Transverse colon (tissue), 4 donors: ENCODE measurements at regions of chr3 and their contacts with region 1.

Region 1: DNA sequence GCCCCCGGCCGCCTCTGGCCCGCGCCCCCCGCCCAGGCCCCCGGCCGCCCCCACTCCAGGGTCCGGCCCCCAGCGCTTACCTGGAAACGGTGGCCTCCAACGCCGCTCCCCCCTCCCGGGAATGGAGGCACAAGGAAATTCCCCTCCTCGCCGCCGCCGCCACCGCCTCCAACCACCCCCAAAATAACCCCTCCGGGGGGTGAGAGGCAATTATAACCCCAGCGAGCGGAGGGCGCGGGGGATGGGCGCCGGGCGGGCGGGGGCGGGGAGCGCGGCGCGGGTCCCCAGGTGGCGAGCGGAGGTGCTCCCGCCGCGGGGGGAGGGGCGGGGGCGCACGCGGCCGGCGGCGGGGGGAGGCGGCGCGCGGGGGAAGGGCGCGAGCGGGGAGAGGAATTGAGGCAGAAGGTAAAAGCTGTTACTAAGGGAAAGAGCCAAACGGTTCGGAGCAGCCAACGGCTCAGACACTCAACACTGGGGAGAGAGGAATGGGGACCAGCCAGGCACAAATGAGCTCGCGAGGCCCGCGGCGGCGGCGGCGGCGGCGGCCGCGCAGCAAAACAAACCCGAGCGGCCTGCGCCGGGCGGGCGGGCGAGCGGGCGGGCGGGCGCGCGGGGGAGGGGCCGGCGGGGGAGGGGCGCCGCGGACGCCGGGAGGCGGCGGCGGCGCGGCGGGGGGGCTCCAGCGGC is at the start of gene TBL1XR1:
- DNase-seq: peak; percentile 95
- H3K4me3 ChIP-seq: peak within 1 kb of the TSS; percentile 87 to 96 (median 92)
- H3K27ac ChIP-seq: peak within 1 kb of the TSS; percentile 99 to 100 (median 100)
- H3K4me1 ChIP-seq: peaks cover 21 to 56% (median 31%) of the 10 kb centered on the region in 4 donors
- H3K27me3 ChIP-seq: no peaks in the 10 kb centered on the region
- CTCF ChIP-seq: no peak
- EP300 ChIP-seq: peak; percentile 90
- POLR2A ChIP-seq: no peak
- total RNA-seq, gene TBL1XR1: 39.4 to 131 (median 68.1) TPM

Region 2: GRCh38 chr3:177050501-177051237 is 146.5 kb before region 1 on chr3:
- in situ Hi-C with region 1: loop called in 2 of 4 experiments (anchors 10 to 25 kb)
- intact Hi-C with region 1: loop called (anchors 2 kb)
- DNase-seq: no peak
- H3K4me3 ChIP-seq: no peak overlapping the region
- H3K27ac ChIP-seq: peak overlapping the region; percentile 25 to 43 (median 33)
- H3K4me1 ChIP-seq: peaks cover 2 to 31% (median 6%) of the 10 kb centered on the region in 4 donors
- H3K27me3 ChIP-seq: no peaks in the 10 kb centered on the region
- CTCF ChIP-seq: peak; percentile 59 to 78 (median 61)
- EP300 ChIP-seq: no peak
- POLR2A ChIP-seq: no peak

Region 3: DNA sequence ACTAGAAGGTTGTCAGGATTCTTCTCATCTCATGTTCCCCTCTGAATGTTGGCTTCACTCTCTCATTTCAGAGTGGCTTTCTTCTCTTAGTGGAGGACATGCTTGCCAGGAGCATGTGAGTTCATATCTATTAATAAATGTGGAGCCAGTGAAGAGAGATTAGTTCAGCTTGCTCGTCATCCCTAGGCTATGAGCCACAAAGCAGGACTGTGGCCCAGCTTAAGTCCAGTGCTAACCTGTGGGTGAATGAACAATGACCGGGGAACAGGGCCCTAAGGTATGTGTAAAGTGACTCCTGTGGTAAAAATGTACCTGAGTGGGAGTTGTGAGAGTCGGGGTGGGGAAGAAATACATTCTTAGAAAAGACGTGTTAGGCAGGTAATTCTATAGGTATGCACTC is 97.0 kb after region 1 on chr3:
- in situ Hi-C with region 1: loop called in 1 of 4 experiments (anchors 10 kb)
- intact Hi-C with region 1: no loop called
- DNase-seq: no peak
- H3K4me3 ChIP-seq: no peak overlapping the region
- H3K27ac ChIP-seq: peak overlapping the region; percentile 81 to 87 (median 84)
- H3K4me1 ChIP-seq: peaks cover 0 to 46% (median 16%) of the 10 kb centered on the region in 4 donors
- H3K27me3 ChIP-seq: no peaks in the 10 kb centered on the region
- CTCF ChIP-seq: no peak
- EP300 ChIP-seq: no peak
- POLR2A ChIP-seq: no peak

Region 4: GRCh38 chr3:177597311-177598096 is 400.3 kb after region 1 on chr3:
- in situ Hi-C with region 1: loop called in 1 of 4 experiments (anchors 10 kb)
- intact Hi-C with region 1: no loop called
- DNase-seq: no peak
- H3K4me3 ChIP-seq: no peak overlapping the region
- H3K27ac ChIP-seq: peak overlapping the region; percentile 68 to 78 (median 75)
- H3K4me1 ChIP-seq: peaks cover 15 to 47% (median 23%) of the 10 kb centered on the region in 4 donors
- H3K27me3 ChIP-seq: no peaks in the 10 kb centered on the region
- CTCF ChIP-seq: no peak
- EP300 ChIP-seq: no peak
- POLR2A ChIP-seq: no peak

Region 5: DNA sequence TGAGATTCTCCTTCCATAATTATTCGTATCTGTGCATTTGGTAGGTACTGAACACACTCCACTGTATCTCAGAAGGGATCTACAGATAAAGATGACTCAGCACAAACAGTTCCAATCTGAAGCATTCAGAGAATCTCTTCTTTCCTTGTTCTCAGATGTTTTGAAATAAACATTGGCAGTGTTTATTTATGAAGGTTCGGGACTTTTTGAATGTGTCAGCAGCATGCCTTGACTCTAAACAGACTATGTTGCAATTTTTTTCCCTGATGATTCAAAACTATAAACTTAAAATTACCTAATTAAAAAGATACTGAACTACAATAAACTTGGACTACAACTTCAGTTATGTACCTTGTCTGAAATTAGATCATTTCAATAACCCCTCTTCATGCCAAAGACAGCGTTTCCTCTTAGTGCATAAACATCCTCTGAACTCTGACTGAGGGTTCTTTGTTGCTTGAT is 613.0 kb after region 1 on chr3:
- in situ Hi-C with region 1: no loop called
- intact Hi-C with region 1: no loop called
- DNase-seq: no peak
- H3K4me3 ChIP-seq: no peak overlapping the region
- H3K27ac ChIP-seq: peak overlapping the region; percentile 12 to 47 (median 26)
- H3K4me1 ChIP-seq: peaks cover 0 to 21% (median 0%) of the 10 kb centered on the region in 4 donors
- H3K27me3 ChIP-seq: no peaks in the 10 kb centered on the region
- CTCF ChIP-seq: no peak
- EP300 ChIP-seq: no peak
- POLR2A ChIP-seq: no peak

Region 6: GRCh38 chr3:178084938-178085816 is 888.0 kb after region 1 on chr3:
- in situ Hi-C with region 1: loop called in 1 of 4 experiments (anchors 25 kb)
- intact Hi-C with region 1: no loop called
- DNase-seq: peak; percentile 75
- H3K4me3 ChIP-seq: no peak overlapping the region
- H3K27ac ChIP-seq: peak overlapping the region; percentile 63 to 74 (median 66)
- H3K4me1 ChIP-seq: peaks cover 35 to 67% (median 41%) of the 10 kb centered on the region in 4 donors
- H3K27me3 ChIP-seq: no peaks in the 10 kb centered on the region
- CTCF ChIP-seq: no peak
- EP300 ChIP-seq: no peak
- POLR2A ChIP-seq: no peak